ENCODE measurements at regions of chr10 and their contacts with region 1.

Region 1: GRCh38 chr10:25682203-25682851 is 251.7 kb upstream of the MYO3A start:
- DNase-seq: peak; percentile 43 to 91 (median 72)

Region 2: DNA sequence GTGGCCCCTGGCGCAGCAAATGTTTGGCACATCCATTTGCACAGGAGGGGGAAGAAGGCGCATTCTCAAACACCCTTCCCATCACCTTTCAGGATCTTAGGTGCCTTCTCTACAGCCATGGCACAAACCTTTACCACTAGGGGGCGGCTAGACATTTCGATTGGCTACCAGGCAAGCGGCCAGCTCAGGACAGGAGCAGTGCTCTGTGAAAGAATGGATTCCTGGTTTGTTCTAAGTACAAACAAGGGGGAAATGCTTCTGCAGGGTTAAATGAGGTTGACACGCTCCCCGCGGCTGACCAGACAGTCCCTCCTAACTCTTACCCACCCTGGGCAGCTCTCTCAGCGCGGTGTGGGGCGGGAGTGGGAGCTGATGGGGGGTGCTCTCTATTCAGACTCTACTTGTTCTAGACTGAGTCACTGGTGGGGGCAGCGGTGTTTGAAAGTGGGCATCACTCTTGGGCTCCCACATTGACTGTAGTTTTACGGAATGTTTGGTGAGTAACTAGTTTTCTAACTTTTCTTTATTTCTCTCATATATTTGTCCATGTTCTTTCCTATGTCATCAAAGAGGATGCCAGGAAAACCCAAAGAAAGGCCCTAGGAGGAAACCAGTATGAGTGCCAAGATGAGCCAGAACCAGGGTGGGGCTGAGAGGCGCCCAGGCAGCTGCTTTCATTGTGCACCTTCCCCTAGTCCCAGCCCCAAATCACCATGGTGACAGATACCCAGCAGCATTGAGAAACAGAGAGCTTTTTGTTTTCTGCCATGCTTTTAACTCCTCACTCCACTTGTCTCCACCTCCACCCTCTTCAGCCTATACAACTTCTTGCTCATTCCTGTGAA is 568.9 kb before region 1 on chr10:
- intact Hi-C with region 1: loop called (anchors 5 kb)
- DNase-seq: peak; percentile 72 to 95 (median 85)

Measured in head of caudate nucleus (tissue), 42 donors.